Caki2 (cell line): ENCODE measurements at regions of chr22 and their contacts with region 1.

Region 1: DNA sequence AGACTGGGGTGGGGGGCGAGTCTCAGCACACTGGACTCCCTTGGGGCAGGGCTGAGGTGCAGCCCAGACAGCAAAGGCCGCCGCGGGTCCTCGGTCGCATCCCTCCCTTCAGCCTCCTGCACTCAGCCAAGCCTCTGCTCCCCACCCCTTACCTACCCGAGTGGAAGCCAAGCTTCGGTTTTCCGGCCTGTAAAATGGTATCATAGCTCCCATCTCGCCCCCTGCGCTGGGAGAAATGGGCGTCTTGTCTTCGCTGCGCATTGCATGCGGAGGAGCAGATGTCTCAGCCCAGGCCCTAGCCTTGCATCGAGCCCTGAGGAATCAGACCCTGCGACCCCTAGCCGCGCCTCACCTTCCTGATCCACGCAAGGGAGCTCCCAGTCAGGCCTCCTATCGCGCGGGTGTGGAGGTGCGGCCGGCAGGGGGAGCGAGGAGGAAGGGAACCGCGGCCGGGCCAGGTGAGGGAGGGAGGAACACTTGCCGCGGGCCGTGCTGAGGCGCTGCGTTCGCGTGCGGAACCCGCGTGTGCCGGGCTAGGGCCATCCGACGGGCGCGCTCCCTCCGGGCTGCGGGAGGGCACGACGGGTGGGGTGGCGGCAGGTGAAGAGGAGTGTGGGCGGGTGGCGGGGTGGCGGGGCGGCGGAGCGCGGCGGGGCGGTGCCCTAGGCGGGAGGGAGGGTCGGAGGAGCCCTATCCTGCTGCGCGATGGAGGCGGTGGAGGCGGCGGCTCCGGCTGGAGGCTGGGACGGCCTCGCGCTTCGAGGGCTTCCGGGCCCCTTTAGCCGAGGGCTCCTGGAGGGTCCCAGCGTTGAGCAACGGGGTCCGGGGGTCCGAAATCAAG is 4.1 kb upstream of the TBX1 start:
- DNase-seq: peak; percentile 56

Region 2: DNA sequence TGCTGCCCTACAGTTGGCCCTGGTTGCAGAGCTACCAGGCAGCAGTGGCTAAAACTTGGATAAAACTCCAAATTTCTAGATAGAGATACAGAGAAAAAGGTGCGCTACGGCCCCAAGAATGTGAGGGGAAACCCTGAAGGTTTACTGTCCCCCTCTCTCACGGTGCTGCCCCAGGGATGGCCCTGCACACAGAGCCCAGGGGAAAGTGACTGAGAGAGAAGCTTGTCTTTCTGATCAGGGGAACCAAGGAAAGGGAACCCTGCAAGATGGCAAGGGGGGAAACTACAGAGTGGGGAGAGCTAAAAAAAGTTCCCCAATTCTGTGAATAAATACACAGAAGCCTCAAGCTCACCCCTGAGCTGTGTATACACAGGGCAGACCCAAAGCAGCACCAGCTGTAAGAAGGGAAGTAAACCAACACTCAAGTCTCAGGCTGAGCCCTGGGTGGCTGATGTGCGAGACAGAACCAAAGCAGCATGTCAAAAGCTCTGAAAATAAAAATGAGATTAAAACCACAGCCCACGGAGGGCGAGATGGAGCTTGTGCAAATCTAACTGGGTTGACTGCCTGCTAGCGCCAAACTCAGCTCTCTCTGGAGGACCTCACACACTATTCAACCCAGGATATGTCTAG is 76.1 kb after region 1 on chr22:
- in situ Hi-C with region 1: loop called (anchors 10 kb)
- DNase-seq: no peak

Region 3: DNA sequence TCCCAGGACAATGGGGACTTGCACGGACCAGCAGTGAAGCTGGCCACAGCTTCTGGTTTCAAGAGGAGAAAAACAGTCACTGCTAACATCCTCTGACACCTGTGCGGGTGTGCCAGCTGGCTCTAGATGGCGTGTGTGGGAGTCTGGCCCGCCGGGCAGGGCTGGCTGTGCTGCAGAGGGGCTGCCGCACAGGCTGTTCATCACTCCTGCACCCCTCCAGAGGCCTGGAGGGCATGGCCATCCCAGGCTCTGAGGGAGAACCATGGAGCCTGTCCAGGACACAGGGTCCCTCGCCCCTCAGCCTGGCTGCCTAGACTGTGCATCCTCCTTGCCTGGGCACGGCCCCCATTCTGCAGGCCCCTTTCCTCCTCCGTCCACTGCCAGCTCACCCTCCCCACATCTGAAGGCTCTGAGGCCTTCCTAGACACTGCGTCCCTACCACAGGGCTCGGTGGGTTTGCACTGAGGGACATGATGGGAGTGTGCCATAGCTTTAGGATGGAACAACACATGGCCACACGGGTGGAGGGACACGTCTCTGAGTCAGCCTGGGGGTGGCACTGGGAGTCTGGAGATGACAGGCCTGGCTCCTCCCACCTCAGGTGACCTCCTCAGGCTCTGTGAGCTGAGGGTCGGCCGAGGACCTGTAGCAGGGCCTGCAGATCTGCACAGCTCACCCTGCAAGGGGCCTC is 140.3 kb after region 1 on chr22:
- in situ Hi-C with region 1: no loop called
- DNase-seq: no peak

Region 4: GRCh38 chr22:19929586-19930550 is 173.4 kb after region 1 on chr22:
- in situ Hi-C with region 1: loop called (anchors 10 kb)
- DNase-seq: no peak